CD14-positive monocyte (primary cell): ENCODE measurements at regions of chr10 and their contacts with region 1.

Region 1: DNA sequence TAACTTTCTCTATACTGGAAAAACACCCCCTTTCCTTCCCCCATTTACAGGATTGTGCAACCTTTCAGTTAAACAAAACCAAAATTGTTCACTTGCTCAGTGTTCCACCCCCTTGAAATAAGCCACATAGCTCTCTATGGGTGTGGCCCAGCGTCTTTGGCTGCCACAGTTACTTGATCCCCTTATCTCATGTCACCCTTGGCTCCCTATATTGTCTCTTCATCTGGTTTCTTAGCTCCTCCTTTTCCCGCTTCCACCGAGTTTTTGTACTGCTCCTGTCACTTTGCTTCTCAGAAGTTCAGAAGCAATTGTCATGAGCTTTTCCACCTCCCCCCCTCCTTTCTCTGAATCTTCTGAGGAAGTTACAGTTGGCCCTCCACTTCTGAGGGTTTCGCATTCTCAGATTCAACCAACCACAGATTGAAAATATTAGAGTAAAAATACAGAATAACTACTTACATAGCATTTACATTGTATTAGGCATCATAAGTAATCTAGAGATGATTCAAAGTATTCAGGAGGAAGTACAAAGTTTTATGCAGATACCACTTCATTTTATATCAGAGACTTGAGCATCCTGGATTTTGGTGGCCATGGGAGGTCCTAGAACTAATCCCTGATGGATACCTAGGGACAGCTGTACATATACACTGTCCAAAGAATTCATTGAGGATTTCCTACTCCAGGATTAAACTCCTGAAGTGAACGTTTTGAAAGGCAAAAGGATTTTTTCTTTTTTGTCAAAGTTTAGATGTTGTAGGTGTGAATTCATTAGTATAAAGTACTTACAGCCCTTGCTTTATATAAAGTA is 60.4 kb downstream of the ADD3 start:
- DNase-seq: peak; percentile 31 to 46 (median 45)
- H3K4me3 ChIP-seq: peak overlapping the region in 2 of 3 experiments; percentile 22 to 47
- H3K4me3 Mint-ChIP-seq: peak overlapping the region; percentile 60 to 92
- H3K27ac ChIP-seq: peak overlapping the region; percentile 74 to 85
- H3K27ac Mint-ChIP-seq: peak overlapping the region; percentile 89 to 97 (median 94)
- H3K4me1 ChIP-seq: peaks cover 43 to 67% of the 10 kb centered on the region in 2 donors
- H3K4me1 Mint-ChIP-seq: peaks cover 59% of the 10 kb centered on the region
- H3K27me3 ChIP-seq: no peaks in the 10 kb centered on the region
- H3K27me3 Mint-ChIP-seq: no peaks in the 10 kb centered on the region
- CTCF ChIP-seq: no peak

Region 2: DNA sequence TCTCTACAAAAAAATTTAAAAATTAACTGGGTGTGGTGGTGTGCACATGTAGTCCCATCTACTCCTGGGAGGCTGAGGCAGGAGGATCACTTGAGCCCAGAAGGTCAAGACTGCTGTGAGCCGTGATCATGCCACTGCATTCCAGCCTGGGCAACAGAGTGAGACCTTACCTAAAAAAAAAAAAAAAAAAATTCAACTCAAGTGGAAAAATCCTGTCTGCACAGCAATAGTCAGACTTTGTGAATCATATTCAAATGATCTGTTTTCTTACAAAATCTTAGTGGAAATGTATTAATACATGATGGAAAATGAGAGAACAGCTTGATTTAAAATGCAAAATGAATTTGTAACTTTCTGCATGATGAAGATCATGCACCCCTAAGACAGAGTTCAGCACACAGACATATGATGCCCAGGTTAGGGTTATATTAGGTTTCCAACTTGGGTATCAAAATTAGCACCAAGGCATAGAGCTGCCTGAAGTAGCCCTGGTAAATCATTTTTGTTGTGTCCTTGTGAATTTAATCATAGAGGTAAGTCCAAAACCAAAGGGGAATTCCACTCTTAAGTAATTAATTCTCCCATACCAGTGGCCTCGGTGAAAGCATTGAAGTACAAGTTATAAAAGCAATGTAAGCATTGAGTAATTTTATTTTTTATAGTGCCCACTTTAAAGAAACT is 33.4 kb after region 1 on chr10:
- intact Hi-C with region 1: loop called in 1 of 2 experiments (anchors 5 kb)
- DNase-seq: peak in 1 of 3 donors; percentile 28
- H3K4me3 ChIP-seq: no peak overlapping the region
- H3K4me3 Mint-ChIP-seq: no peak overlapping the region
- H3K27ac ChIP-seq: no peak overlapping the region
- H3K27ac Mint-ChIP-seq: peak overlapping the region in 2 of 7 donors; percentile 32 to 79
- H3K4me1 ChIP-seq: no peaks in the 10 kb centered on the region
- H3K4me1 Mint-ChIP-seq: peaks cover 1% of the 10 kb centered on the region
- H3K27me3 ChIP-seq: no peaks in the 10 kb centered on the region
- H3K27me3 Mint-ChIP-seq: peaks cover 0 to 2% (median 0%) of the 10 kb centered on the region in 3 donors
- CTCF ChIP-seq: no peak